Activated CD4-positive, alpha-beta T cell treated with anti-CD3 and anti-CD28 coated beads, Interleukin-2, amount 10 ng/mL, durations not matched to agents 7 days and 5 days (primary cell): ENCODE measurements at regions of chr4 and their contacts with region 1.

Region 1: DNA sequence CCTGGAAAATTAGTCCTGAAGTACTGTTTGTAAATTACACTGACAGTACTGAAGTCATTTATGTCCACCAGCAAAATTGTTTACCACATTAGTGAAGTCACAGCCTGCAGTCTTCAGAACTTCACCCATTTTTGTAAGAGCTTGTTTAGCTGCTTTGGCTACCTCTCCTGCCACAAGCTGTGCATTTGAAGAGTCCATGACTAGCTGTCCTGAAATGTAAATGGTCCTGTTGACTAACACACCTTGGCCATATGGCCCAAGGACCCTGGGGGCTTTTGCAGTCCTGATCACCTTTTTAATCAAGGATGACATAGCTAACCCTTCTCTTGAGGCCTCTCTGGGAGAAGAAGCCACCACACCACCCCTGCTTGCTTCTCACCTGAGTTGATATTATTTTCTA is 21.4 kb upstream of the ZNF518B start:
- DNase-seq: no peak
- H3K4me3 Mint-ChIP-seq: no peak overlapping the region
- H3K27ac Mint-ChIP-seq: no peak overlapping the region
- H3K4me1 Mint-ChIP-seq: no peaks in the 10 kb centered on the region
- H3K27me3 Mint-ChIP-seq: peaks cover 4% of the 10 kb centered on the region

Region 2: DNA sequence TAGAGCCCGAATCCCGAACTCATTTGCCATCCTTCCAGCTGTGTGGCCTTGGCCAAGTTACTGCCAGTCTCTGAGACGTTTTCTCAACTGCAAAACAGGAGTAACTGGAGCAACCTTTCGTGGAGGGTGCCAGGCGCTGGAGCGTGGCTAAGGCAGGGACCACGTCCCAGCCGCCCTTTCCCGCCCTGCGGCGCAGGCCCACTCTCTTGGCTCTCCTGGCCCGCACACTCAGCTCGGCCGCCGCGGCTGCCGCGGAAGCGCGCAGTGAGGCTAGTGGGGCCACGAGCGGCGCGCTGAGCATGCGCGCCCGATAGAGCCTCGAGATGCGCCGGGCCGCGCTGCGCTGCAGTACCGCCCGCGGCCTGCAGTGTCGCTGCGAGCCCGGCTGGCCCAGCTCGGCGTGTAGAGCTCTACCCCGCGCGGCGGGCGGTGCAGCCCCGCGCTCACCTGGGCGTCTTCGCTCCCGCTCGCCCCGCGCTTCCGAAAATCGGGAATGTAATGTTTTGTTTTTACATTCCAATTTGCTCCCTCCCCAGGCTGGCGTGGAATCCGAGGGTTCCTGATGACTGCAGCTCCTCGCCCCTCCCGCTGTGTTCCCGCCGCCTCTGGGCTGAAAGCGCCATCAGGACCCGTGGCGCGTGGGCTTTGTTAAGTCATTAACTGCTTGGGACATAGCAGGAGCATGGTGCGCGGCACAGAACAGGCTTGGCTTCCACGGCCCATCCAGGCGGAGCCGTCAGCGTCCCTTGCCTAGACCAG is 17.4 kb before region 1 on chr4:
- CTCF ChIA-PET with region 1: interaction called, 13 read pairs
- POLR2A ChIA-PET with region 1: no interaction called
- DNase-seq: peak; percentile 71
- H3K4me3 Mint-ChIP-seq: peak overlapping the region; percentile 62
- H3K27ac Mint-ChIP-seq: no peak overlapping the region
- H3K4me1 Mint-ChIP-seq: peaks cover 22% of the 10 kb centered on the region
- H3K27me3 Mint-ChIP-seq: peaks cover 24% of the 10 kb centered on the region

Region 3: DNA sequence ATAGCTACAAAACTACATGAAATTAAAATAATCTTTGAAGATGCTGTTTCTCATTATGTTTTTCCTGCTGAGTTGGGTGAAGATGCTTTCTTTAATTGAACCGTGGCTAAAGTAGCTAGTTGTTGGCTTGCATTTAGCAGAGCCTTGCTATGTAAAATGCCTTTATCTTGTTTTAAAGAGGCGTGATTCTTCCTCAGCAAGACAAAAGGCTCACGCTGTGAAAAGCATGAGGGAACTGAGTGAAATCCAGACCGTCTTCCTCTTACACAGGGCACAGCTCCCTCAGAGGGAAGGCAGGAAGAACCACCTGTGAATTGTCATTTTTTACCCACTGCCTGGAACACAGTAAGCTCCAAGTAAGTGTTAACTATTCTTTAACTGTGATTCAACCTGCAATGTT is 17.6 kb after region 1 on chr4:
- CTCF ChIA-PET with region 1: no interaction called
- POLR2A ChIA-PET with region 1: no interaction called
- DNase-seq: no peak
- H3K4me3 Mint-ChIP-seq: no peak overlapping the region
- H3K27ac Mint-ChIP-seq: no peak overlapping the region
- H3K4me1 Mint-ChIP-seq: no peaks in the 10 kb centered on the region
- H3K27me3 Mint-ChIP-seq: no peaks in the 10 kb centered on the region

Region 4: DNA sequence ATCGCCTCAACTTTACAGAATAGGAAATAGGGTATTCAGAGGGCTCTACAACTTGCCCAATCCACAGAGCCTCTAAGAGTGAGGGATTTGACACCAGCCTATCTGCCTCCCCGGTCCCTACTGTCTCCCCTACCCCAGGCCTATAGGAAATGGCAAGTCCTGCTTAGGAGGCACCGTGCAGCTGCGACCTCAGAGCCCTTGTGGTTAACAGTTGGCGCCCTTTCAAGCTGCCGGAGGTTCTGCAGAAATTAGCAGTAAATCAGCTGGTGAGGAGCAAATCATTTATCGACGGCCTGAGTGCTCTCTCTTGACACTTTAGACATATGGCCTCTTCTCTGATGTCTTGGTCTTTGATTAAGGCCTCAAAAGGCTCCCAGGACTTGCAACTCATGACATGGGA is 109.1 kb after region 1 on chr4:
- CTCF ChIA-PET with region 1: no interaction called
- POLR2A ChIA-PET with region 1: no interaction called
- DNase-seq: peak; percentile 39
- H3K4me3 Mint-ChIP-seq: no peak overlapping the region
- H3K27ac Mint-ChIP-seq: peak overlapping the region; percentile 46
- H3K4me1 Mint-ChIP-seq: peaks cover 34% of the 10 kb centered on the region
- H3K27me3 Mint-ChIP-seq: no peaks in the 10 kb centered on the region